Heart left ventricle (tissue), 16 donors: ENCODE measurements at regions of chr15 and their contacts with region 1.

Region 1: DNA sequence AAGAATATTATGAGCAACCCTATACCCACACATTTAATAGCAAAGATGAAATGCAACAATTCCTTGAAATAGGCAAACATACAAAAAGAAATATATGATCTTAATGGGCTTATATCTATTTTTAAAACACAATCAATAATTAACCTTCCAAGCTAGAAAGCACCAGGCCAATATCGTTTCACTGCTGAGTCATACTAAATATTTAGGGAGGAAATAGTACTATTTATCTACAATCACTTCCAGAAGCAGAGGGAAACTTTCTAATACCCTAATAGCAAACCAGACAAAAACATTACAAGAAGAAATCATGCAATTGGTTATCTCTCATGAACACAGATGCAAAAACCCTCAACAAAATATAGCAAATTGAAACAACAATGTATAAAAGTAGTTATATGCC is 207.8 kb downstream of the MTHFS start:
- DNase-seq: no peak
- ATAC-seq: no peak
- H3K4me3 ChIP-seq: no peak overlapping the region
- H3K27ac ChIP-seq: no peak overlapping the region
- H3K4me1 ChIP-seq: no peaks in the 10 kb centered on the region
- H3K27me3 ChIP-seq: peaks cover 0 to 3% (median 0%) of the 10 kb centered on the region in 9 donors
- CTCF ChIP-seq: no peak
- POLR2A ChIP-seq: no peak

Region 2: GRCh38 chr15:79881254-79881653 is 192.2 kb after region 1 on chr15:
- intact Hi-C with region 1: loop called in 1 of 10 experiments (anchors 5 kb)
- DNase-seq: no peak
- ATAC-seq: no peak
- H3K4me3 ChIP-seq: no peak overlapping the region
- H3K27ac ChIP-seq: no peak overlapping the region
- H3K4me1 ChIP-seq: peaks cover 0 to 9% (median 0%) of the 10 kb centered on the region in 12 donors
- H3K27me3 ChIP-seq: no peaks in the 10 kb centered on the region
- CTCF ChIP-seq: no peak
- POLR2A ChIP-seq: no peak